WTC11 (cell line): ENCODE measurements at regions of chr16 and their contacts with region 1.

Region 1: GRCh38 chr16:58843675-58844074 is 109.6 kb upstream of the GOT2 start:
- DNase-seq: no peak
- ATAC-seq: no peak
- H3K4me3 Mint-ChIP-seq: no peak overlapping the region
- H3K27ac Mint-ChIP-seq: no peak overlapping the region
- H3K4me1 Mint-ChIP-seq: peaks cover 2% of the 10 kb centered on the region; the same call in 1 of the 2 replicates
- H3K27me3 Mint-ChIP-seq: no peaks in the 10 kb centered on the region
- CTCF ChIP-seq: no peak

Region 2: GRCh38 chr16:58345574-58346354 is 497.9 kb before region 1 on chr16:
- CTCF ChIA-PET with region 1: no interaction called
- POLR2A ChIA-PET with region 1: no interaction called
- DNase-seq: no peak
- ATAC-seq: no peak
- H3K4me3 Mint-ChIP-seq: no peak overlapping the region
- H3K27ac Mint-ChIP-seq: no peak overlapping the region
- H3K4me1 Mint-ChIP-seq: peaks cover 23% of the 10 kb centered on the region
- H3K27me3 Mint-ChIP-seq: peaks cover 34% of the 10 kb centered on the region
- CTCF ChIP-seq: no peak

Region 3: GRCh38 chr16:58807276-58807675 is 36.4 kb before region 1 on chr16:
- CTCF ChIA-PET with region 1: no interaction called
- POLR2A ChIA-PET with region 1: no interaction called
- DNase-seq: no peak
- ATAC-seq: no peak
- H3K4me3 Mint-ChIP-seq: no peak overlapping the region
- H3K27ac Mint-ChIP-seq: no peak overlapping the region
- H3K4me1 Mint-ChIP-seq: no peaks in the 10 kb centered on the region
- H3K27me3 Mint-ChIP-seq: peaks cover 4% of the 10 kb centered on the region
- CTCF ChIP-seq: no peak

Region 4: GRCh38 chr16:59249011-59249410 is 405.3 kb after region 1 on chr16:
- CTCF ChIA-PET with region 1: interaction called, 21 read pairs
- POLR2A ChIA-PET with region 1: no interaction called
- DNase-seq: peak; percentile 41
- ATAC-seq: peak; percentile 97
- H3K4me3 Mint-ChIP-seq: no peak overlapping the region
- H3K27ac Mint-ChIP-seq: no peak overlapping the region
- H3K4me1 Mint-ChIP-seq: peaks cover 16% of the 10 kb centered on the region
- H3K27me3 Mint-ChIP-seq: no peaks in the 10 kb centered on the region
- CTCF ChIP-seq: no peak